Dorsolateral prefrontal cortex (tissue), 120 donors: ENCODE measurements at regions of chr4 and their contacts with region 1.

Region 1: DNA sequence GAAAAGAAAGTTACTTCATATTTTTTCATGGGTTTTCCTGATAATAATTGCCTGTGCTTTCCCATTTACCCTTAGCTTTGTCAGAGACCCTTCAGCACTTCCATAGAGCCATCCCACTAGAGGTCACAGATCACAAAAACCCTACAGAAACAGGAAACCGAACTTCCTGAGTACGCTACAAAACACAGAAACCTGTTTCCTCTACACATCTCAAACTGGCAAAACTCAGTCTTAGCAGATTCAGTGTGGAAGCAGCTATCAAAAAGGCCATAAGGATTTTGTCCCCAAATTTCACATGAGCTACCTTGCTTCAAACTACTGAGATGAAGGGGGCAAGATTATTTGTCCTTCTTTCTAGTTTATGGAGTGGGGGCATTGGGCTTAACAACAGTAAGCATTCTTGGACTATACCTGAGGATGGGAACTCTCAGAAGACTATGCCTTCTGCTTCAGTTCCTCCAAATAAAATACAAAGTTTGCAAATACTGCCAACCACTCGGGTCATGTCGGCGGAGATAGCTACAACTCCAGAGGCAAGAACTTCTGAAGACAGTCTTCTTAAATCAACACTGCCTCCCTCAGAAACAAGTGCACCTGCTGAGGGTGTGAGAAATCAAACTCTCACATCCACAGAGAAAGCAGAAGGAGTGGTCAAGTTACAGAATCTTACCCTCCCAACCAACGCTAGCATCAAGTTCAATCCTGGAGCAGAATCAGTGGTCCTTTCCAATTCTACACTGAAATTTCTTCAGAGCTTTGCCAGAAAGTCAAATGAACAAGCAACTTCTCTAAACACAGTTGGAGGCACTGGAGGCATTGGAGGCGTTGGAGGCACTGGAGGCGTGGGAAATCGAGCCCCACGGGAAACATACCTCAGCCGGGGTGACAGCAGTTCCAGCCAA is at the start of gene MMRN1:
- DNase-seq: no peak
- H3K4me3 ChIP-seq: peak within 1 kb of the TSS in 8 of 59 donors; percentile 6 to 31 (median 14)
- H3K27ac ChIP-seq: no peak within 1 kb of the TSS
- H3K27me3 ChIP-seq: no peaks in the 10 kb centered on the region
- CTCF ChIP-seq: no peak
- total RNA-seq, gene MMRN1: 0.16 to 10.9 (median 1.1) TPM

Region 2: GRCh38 chr4:89598602-89599001 is 296.3 kb before region 1 on chr4:
- intact Hi-C with region 1: loop called in 1 of 2 experiments (anchors 10 kb)
- DNase-seq: no peak
- H3K4me3 ChIP-seq: no peak overlapping the region
- H3K27ac ChIP-seq: no peak overlapping the region
- H3K27me3 ChIP-seq: no peaks in the 10 kb centered on the region
- CTCF ChIP-seq: peak in 33 of 56 donors; percentile 10 to 51 (median 25)